PC-3 (cell line): ENCODE measurements at regions of chr4 and their contacts with region 1.

Region 1: GRCh38 chr4:129218360-129218759 is 122.4 kb downstream of the C4orf33 start:
- DNase-seq: peak; percentile 53
- ATAC-seq: peak; percentile 97
- H3K4me3 ChIP-seq: no peak overlapping the region
- H3K27ac ChIP-seq: no peak overlapping the region
- H3K4me1 ChIP-seq: peaks cover 7% of the 10 kb centered on the region; the same call in 1 of the 2 replicates
- H3K27me3 ChIP-seq: no peaks in the 10 kb centered on the region
- CTCF ChIP-seq: peak; percentile 63

Region 2: DNA sequence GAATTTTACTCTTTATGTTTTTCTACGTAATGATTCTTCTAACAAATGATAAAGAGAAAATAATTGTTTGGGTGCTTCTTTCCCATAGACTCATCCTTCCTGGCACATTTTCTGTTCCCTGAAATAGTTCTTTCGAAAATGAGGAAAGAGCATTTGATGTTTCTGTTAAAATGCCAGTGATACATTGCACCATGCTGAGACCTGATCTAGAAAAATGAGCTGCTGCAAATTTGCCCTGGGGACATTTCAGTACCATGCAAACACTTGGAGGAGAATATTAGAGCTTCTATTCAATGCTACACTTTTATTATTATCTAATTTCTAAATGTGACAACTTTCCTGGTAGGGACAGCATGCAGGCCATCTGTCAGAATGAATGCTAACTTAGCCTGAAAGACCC is 39.1 kb before region 1 on chr4:
- CTCF ChIA-PET with region 1: no interaction called
- POLR2A ChIA-PET with region 1: no interaction called
- intact Hi-C with region 1: no loop called
- DNase-seq: no peak
- ATAC-seq: no peak
- H3K4me3 ChIP-seq: no peak overlapping the region
- H3K27ac ChIP-seq: no peak overlapping the region
- H3K4me1 ChIP-seq: no peaks in the 10 kb centered on the region
- H3K27me3 ChIP-seq: no peaks in the 10 kb centered on the region
- CTCF ChIP-seq: no peak

Region 3: GRCh38 chr4:129326571-129327460 is 108.5 kb after region 1 on chr4:
- CTCF ChIA-PET with region 1: no interaction called
- POLR2A ChIA-PET with region 1: no interaction called
- intact Hi-C with region 1: loop called (anchors 5 kb)
- DNase-seq: peak; percentile 29
- ATAC-seq: peak; percentile 27; the same call in 1 of the 2 replicates
- H3K4me3 ChIP-seq: no peak overlapping the region
- H3K27ac ChIP-seq: peak overlapping the region; percentile 77
- H3K4me1 ChIP-seq: peaks cover 20% of the 10 kb centered on the region
- H3K27me3 ChIP-seq: no peaks in the 10 kb centered on the region
- CTCF ChIP-seq: no peak

Region 4: GRCh38 chr4:129641179-129641578 is 422.8 kb after region 1 on chr4:
- CTCF ChIA-PET with region 1: no interaction called
- POLR2A ChIA-PET with region 1: no interaction called
- intact Hi-C with region 1: loop called (anchors 1 kb)
- DNase-seq: peak; percentile 67
- ATAC-seq: peak; percentile 31; the same call in 1 of the 2 replicates
- H3K4me3 ChIP-seq: no peak overlapping the region
- H3K27ac ChIP-seq: no peak overlapping the region
- H3K4me1 ChIP-seq: no peaks in the 10 kb centered on the region
- H3K27me3 ChIP-seq: no peaks in the 10 kb centered on the region
- CTCF ChIP-seq: peak; percentile 75